ENCODE measurements at regions of chr20 and their contacts with region 1.

Region 1: GRCh38 chr20:3276680-3277015 is 37.7 kb upstream of the SLC4A11 start:
- DNase-seq: peak in 1 of 2 donors; percentile 8
- ATAC-seq: peak; percentile 75

Region 2: DNA sequence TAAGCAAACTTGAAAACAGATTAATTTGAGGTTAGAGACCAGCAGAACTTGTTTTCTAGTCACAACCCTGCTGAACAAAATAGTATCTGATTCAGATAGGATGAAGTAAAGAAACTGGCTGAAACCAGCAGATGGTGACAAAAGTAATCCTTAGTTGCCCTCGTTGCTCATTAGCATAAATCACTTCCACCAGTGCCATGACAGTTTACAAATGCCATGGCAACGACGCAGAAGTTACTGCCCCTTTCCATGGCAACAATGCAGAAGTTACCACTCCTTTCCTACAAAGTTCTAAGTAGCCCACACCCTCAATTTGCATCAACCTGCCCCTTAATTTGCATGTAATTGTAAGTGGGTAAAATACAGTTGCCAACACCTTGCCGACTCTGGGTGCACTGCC is 829.8 kb before region 1 on chr20:
- intact Hi-C with region 1: no loop called
- DNase-seq: no peak
- ATAC-seq: no peak

Region 3: DNA sequence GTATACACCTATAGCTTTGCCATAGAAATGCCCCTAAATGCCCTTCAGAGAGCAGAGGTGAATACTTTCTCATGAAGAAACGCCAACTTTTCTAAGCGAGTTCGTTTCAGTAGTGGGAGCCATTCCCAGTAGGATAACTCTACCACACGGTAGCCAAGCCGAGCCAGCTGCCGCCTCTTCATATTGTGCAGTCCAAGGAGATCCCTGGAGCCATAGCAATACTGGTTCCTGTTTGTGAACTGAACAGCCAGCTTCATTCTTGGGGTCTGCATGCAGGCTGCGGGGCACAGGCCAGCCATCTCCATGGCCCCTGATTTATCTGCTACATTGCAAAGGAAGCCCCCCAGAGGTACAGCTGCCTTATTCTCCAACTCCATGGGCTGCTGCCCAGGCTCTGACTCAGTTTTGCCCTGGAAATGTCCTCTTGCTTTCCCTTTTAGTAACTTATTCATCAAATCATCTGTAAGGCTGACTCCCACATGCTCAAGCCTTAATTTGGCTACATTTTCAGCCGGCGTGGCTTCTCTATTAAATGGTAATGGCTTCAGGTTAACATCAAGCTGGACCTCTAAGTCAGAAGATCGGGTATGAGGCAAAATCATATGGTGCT is 129.8 kb before region 1 on chr20:
- intact Hi-C with region 1: no loop called
- DNase-seq: no peak
- ATAC-seq: no peak

Region 4: DNA sequence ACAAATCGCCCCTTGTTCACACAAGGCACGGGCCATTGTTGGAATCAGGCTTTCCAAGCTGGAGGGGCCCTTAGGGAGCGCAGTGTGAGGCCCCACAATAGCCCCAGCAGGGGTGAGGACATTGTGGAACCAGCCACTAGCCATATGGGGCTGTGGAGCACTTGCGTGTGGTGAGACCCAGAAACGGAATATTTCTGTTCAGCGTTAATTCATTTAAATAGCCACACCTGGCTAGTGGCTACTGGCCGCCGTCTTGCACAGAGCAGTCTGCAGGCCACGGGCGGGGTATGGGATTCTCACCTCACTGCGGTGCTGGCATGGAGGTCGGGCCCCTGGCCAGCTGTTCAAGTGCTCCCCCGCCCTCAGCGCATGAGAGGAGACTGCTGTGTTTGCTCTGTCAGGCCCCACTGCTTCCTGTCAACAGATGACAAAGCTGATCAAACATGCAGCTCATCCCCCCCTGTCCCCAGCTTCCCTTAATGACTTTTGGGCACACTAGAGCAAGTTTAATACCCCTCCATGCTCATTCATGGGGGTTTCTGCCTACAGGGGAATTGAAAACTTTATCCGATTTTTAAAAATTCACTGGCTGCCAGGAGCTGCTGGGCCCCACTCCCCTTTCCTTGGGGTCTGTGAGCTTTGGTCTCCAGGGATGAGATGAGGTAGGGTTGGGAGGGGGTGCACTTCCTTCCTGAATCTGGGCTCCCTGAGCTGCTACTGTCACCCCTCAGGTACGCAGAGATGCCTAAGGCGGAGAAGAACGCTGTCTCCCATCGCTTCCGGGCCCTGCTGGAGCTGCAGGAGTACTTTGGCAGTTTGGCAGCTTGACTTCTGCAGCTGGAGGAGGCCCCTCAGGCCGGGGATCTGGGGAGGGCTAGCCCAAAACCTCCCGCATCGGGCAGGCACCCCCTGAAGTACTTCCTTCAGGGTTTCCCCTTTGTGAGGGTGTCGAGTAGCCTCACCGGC is 53.7 kb before region 1 on chr20:
- intact Hi-C with region 1: loop called in 1 of 2 experiments (anchors 10 kb)
- DNase-seq: peak in 1 of 2 donors; percentile 33
- ATAC-seq: peak; percentile 17

Region 5: DNA sequence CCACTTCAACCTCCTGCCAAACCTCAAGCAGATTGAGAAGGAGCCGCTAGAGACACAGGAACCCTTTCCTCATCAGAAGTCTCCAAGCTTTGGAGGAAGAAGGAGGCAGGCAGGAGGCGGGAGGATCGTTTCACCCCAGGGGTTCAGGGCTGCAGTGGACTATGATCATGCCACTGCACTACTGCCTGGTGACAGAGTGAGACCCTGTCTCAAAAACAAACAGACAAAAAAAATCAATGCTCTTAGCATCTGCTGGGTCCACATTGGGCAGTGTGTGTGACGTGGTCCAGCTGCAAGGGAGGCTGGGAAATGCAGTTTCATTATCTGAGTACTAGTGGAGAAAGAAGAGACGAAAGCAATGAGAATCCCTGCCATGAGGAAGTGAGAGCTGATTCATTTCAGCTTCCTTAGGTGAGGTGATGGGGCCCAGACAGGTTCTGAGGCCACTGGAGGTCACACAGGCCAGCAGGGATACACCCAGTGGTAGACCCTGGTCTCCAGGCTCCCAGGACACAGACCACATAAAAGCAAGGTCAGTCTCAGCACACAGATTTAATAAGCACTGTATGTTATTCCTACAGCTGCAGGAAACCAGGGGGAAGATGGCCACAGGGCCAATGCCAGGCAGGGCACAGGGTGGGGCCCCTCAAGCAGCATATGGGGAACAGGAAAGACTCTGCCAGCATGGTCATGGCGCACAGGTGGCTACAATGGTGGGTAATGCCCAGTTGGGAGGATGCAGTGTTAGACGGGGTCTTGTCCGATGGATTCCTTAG is 382.3 kb after region 1 on chr20:
- intact Hi-C with region 1: no loop called
- DNase-seq: no peak
- ATAC-seq: no peak